Spleen (tissue), 13 donors: ENCODE measurements at regions of chrX and their contacts with region 1.

Region 1: GRCh38 chrX:131885558-131885957 is 137.5 kb upstream of the STK26 start:
- DNase-seq: no peak
- H3K4me3 ChIP-seq: no peak overlapping the region
- H3K27ac ChIP-seq: no peak overlapping the region
- H3K4me1 ChIP-seq: no peaks in the 10 kb centered on the region
- H3K27me3 ChIP-seq: peaks cover 0 to 10% (median 0%) of the 10 kb centered on the region in 7 donors
- CTCF ChIP-seq: no peak
- POLR2A ChIP-seq: no peak

Region 2: DNA sequence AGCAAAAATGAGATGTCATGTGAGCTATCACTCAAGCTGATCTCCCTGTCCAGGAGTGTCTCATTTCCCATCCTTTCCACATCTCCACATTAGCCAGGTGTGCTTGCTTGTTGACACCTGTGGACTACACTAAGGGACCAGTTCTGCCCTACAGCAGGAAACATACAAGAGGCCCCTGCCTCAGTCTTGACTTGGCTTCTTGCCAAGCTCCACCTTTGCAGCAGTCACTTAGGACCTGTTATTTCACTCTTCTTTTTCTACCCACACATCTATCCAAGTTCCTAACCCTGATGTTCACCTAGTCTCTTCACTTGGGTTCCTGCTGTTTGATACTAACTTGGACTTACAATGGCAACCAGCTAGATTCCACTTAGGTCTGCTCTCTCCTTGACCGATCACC is 229.1 kb after region 1 on chrX:
- intact Hi-C with region 1: loop called (anchors 5 kb)
- DNase-seq: no peak
- H3K4me3 ChIP-seq: no peak overlapping the region
- H3K27ac ChIP-seq: no peak overlapping the region
- H3K4me1 ChIP-seq: no peaks in the 10 kb centered on the region
- H3K27me3 ChIP-seq: peaks cover 0 to 9% (median 0%) of the 10 kb centered on the region in 7 donors
- CTCF ChIP-seq: no peak
- POLR2A ChIP-seq: no peak